ENCODE measurements at regions of chr2 and their contacts with region 1.

Region 1: DNA sequence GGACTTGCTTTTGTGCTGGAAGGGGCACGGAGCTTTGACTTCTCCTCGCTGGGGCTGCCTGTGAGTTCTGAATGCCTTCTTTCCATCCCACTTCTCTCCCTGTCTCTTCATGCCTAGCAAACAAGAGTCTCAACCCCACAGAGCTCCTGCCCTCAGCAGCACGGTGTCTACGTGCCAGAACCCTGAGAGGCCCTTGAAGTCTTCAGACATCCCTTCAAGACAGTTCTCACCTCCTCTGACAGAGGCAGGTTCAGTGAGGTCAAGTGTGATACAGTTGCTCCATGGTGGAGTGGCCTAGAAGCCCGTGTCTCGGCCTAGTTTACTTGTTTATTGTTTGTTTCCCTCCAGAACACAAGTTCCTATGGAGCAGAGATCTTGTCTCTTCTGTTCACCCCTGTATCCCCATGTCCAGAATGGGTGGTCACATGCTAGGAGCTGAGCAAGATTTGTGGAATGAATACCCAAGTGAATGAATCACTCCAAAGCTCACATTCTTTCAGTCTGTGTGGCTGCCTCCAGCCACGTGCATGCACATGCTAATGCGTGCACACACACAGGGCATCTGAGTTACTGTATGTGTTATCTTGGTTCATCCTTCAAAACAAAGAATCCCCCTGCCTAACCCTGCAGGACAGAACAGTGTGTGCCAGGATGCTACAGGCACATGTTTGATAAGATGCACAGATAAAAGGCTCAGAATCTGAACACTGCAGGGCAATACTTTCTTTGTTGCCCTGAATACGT is 391.6 kb downstream of the NBAS start:
- DNase-seq: peak; percentile 47 to 60
- H3K4me3 ChIP-seq: no peak overlapping the region
- H3K4me3 Mint-ChIP-seq: no peak overlapping the region
- H3K27ac Mint-ChIP-seq: peak overlapping the region; percentile 93
- H3K4me1 ChIP-seq: peaks cover 15% of the 10 kb centered on the region
- H3K4me1 Mint-ChIP-seq: peaks cover 24% of the 10 kb centered on the region
- H3K27me3 ChIP-seq: no peaks in the 10 kb centered on the region
- H3K27me3 Mint-ChIP-seq: no peaks in the 10 kb centered on the region
- CTCF ChIP-seq: no peak

Region 2: GRCh38 chr2:14673351-14673875 is 496.1 kb before region 1 on chr2:
- CTCF ChIA-PET with region 1: no interaction called
- POLR2A ChIA-PET with region 1: no interaction called
- intact Hi-C with region 1: no loop called
- DNase-seq: no peak
- H3K4me3 ChIP-seq: no peak overlapping the region
- H3K4me3 Mint-ChIP-seq: no peak overlapping the region
- H3K27ac Mint-ChIP-seq: no peak overlapping the region
- H3K4me1 ChIP-seq: no peaks in the 10 kb centered on the region
- H3K4me1 Mint-ChIP-seq: no peaks in the 10 kb centered on the region
- H3K27me3 ChIP-seq: no peaks in the 10 kb centered on the region
- H3K27me3 Mint-ChIP-seq: no peaks in the 10 kb centered on the region
- CTCF ChIP-seq: no peak

Region 3: GRCh38 chr2:15023221-15023620 is 146.3 kb before region 1 on chr2:
- CTCF ChIA-PET with region 1: no interaction called
- POLR2A ChIA-PET with region 1: no interaction called
- intact Hi-C with region 1: no loop called
- DNase-seq: no peak
- H3K4me3 ChIP-seq: no peak overlapping the region
- H3K4me3 Mint-ChIP-seq: no peak overlapping the region
- H3K27ac Mint-ChIP-seq: no peak overlapping the region
- H3K4me1 ChIP-seq: no peaks in the 10 kb centered on the region
- H3K4me1 Mint-ChIP-seq: no peaks in the 10 kb centered on the region
- H3K27me3 ChIP-seq: no peaks in the 10 kb centered on the region
- H3K27me3 Mint-ChIP-seq: peaks cover 2% of the 10 kb centered on the region
- CTCF ChIP-seq: no peak

Region 4: GRCh38 chr2:15112216-15112615 is 57.3 kb before region 1 on chr2:
- CTCF ChIA-PET with region 1: no interaction called
- POLR2A ChIA-PET with region 1: no interaction called
- intact Hi-C with region 1: no loop called
- DNase-seq: no peak
- H3K4me3 ChIP-seq: no peak overlapping the region
- H3K4me3 Mint-ChIP-seq: no peak overlapping the region
- H3K27ac Mint-ChIP-seq: no peak overlapping the region
- H3K4me1 ChIP-seq: no peaks in the 10 kb centered on the region
- H3K4me1 Mint-ChIP-seq: no peaks in the 10 kb centered on the region
- H3K27me3 ChIP-seq: no peaks in the 10 kb centered on the region
- H3K27me3 Mint-ChIP-seq: peaks cover 3% of the 10 kb centered on the region
- CTCF ChIP-seq: no peak

Region 5: GRCh38 chr2:15154297-15154696 is 15.2 kb before region 1 on chr2:
- CTCF ChIA-PET with region 1: no interaction called
- POLR2A ChIA-PET with region 1: no interaction called
- intact Hi-C with region 1: loop called (anchors 1 kb)
- DNase-seq: no peak
- H3K4me3 ChIP-seq: no peak overlapping the region
- H3K4me3 Mint-ChIP-seq: no peak overlapping the region
- H3K27ac Mint-ChIP-seq: peak overlapping the region; percentile 22
- H3K4me1 ChIP-seq: peaks cover 15% of the 10 kb centered on the region
- H3K4me1 Mint-ChIP-seq: no peaks in the 10 kb centered on the region
- H3K27me3 ChIP-seq: no peaks in the 10 kb centered on the region
- H3K27me3 Mint-ChIP-seq: no peaks in the 10 kb centered on the region
- CTCF ChIP-seq: no peak